ENCODE measurements at regions of chr1 and their contacts with region 1.

Region 1: GRCh38 chr1:27234049-27234882 is at the start of gene WDTC1:
- DNase-seq: peak; percentile 86 to 95
- H3K4me3 ChIP-seq: peak within 1 kb of the TSS; percentile 63 to 84 (median 67)
- H3K27ac ChIP-seq: no peak within 1 kb of the TSS
- H3K4me1 ChIP-seq: peaks cover 0 to 8% (median 6%) of the 10 kb centered on the region in 4 experiments; a peak in 5 of 7 replicates
- H3K27me3 ChIP-seq: peaks cover 0 to 3% (median 0%) of the 10 kb centered on the region in 4 experiments; a peak in 2 of 7 replicates
- CTCF ChIP-seq: no peak
- EP300 ChIP-seq: 0 out of 3 replicates have a peak, but pooled peaks of 1 of the 2 experiments have one; percentile 25
- POLR2A ChIP-seq: no peak
- RAD21 ChIP-seq: no peak
- total RNA-seq, gene WDTC1: 17.5 and 18.7 TPM in 2 replicates

Region 2: GRCh38 chr1:27010989-27011764 is 223.1 kb before region 1 on chr1:
- CTCF ChIA-PET with region 1: no interaction called
- POLR2A ChIA-PET with region 1: interaction called, 10 read pairs
- DNase-seq: peak in 1 of 2 experiments; percentile 85
- H3K4me3 ChIP-seq: peak overlapping the region; percentile 88 to 100 (median 92)
- H3K27ac ChIP-seq: peak overlapping the region; percentile 64; the same call in 1 of the 2 replicates
- H3K4me1 ChIP-seq: peaks cover 18 to 39% (median 33%) of the 10 kb centered on the region in 4 experiments
- H3K27me3 ChIP-seq: no peaks in the 10 kb centered on the region
- CTCF ChIP-seq: no peak
- EP300 ChIP-seq: no peak; a peak in 1 of 3 replicates
- POLR2A ChIP-seq: peak in 1 of 2 experiments; percentile 54; a peak in 1 of 3 replicates
- RAD21 ChIP-seq: no peak; a peak in 1 of 4 replicates

Region 3: GRCh38 chr1:27044613-27045151 is 189.6 kb before region 1 on chr1:
- CTCF ChIA-PET with region 1: no interaction called
- POLR2A ChIA-PET with region 1: no interaction called
- DNase-seq: peak; percentile 70 to 99
- H3K4me3 ChIP-seq: peak overlapping the region in 3 of 4 experiments; percentile 12 to 39 (median 24); a peak in 4 of 8 replicates
- H3K27ac ChIP-seq: no peak overlapping the region
- H3K4me1 ChIP-seq: peaks cover 7 to 25% (median 12%) of the 10 kb centered on the region in 4 experiments
- H3K27me3 ChIP-seq: no peaks in the 10 kb centered on the region
- CTCF ChIP-seq: peak; percentile 94 to 100 (median 97)
- EP300 ChIP-seq: no peak
- POLR2A ChIP-seq: no peak
- RAD21 ChIP-seq: peak; percentile 99

Region 4: GRCh38 chr1:27130798-27131197 is 103.5 kb before region 1 on chr1:
- CTCF ChIA-PET with region 1: no interaction called
- POLR2A ChIA-PET with region 1: no interaction called
- DNase-seq: no peak
- H3K4me3 ChIP-seq: no peak overlapping the region
- H3K27ac ChIP-seq: no peak overlapping the region
- H3K4me1 ChIP-seq: no peaks in the 10 kb centered on the region; a peak in 1 of 7 replicates
- H3K27me3 ChIP-seq: no peaks in the 10 kb centered on the region
- CTCF ChIP-seq: no peak
- EP300 ChIP-seq: no peak
- POLR2A ChIP-seq: no peak
- RAD21 ChIP-seq: no peak

Measured in H1 (cell line).